ENCODE measurements at regions of chr19 and their contacts with region 1.

Region 1: DNA sequence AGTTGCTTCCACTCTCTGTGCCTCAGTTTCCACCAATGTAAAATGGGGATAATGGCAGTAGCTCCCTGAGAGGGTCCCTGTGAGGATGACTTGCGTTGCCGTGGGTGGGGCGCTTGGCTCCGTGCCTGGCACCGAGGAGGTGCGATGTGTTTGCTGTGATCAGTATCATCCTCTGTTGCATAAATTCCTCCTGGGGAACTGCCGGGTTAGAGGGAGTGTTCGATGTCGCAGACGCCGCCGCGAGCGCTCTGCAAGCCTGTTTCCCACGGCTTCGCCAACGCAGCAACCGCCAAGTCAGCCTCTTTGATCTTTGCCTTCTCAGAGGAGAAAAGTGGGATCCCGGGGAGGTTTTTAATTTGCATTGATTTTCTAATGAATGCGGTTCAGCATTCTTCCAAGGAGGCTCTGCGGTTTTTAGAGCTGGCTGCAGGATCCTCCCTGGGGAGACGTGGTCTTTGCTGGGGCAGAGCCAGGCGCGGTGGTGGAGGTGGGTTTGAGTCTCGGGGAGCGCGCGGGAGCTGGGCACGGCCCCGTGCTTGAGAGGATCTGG is 7.6 kb downstream of the GPR32 start:
- H3K4me3 ChIP-seq: peak overlapping the region; percentile 16
- H3K27ac ChIP-seq: no peak overlapping the region
- H3K4me1 ChIP-seq: 0 out of 2 replicates have a peak, but pooled peaks cover 2% of the 10 kb centered on the region
- CTCF ChIP-seq: no peak

Region 2: DNA sequence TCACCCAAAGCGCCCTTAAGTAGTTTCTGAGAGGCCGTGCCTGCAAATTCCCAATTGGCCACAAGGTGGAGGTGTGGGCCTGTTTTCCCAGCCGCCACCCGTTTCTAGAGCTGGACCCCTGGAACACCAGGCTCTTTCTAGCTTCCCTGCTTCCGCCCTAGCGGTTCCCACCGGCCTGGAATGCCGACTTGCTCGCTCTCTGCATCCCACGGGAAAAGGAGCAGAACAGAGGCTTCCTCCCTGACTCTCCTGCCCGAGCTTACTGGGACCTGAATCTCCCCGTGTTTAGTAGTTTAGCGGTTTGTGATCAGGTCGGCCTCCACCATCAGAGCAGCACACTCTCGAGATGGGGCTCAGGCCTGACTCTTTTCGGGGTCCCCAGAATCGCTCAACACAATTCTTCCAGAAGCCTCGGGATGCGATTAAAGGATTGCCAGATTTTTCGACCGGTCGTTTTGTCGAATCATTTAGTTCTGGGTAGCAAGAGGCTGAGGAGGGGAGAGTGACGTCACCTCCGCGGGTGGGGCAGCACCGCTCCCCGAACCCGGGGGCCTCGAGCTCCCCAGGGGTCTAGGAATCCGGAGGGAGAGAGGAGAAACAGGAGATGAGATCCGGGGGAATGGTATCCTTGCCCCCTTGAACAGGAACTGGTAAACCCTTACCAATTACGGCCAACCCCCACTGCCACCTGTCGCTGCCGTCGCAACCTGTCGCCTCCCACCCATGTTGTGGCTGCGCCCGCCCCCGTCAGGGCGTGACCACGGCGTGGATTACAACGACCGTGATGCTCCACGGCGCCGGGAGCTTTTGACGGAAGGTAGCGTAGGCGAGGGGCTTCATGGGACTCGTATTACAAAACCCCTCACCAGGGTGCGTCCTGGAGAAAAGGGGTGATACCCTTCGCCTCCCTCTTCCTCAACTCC is 420.4 kb before region 1 on chr19:
- CTCF ChIA-PET with region 1: interaction called, 14 read pairs
- POLR2A ChIA-PET with region 1: no interaction called
- H3K4me3 ChIP-seq: peak overlapping the region; percentile 32
- H3K27ac ChIP-seq: no peak overlapping the region
- H3K4me1 ChIP-seq: no peaks in the 10 kb centered on the region
- CTCF ChIP-seq: peak; percentile 73

Region 3: DNA sequence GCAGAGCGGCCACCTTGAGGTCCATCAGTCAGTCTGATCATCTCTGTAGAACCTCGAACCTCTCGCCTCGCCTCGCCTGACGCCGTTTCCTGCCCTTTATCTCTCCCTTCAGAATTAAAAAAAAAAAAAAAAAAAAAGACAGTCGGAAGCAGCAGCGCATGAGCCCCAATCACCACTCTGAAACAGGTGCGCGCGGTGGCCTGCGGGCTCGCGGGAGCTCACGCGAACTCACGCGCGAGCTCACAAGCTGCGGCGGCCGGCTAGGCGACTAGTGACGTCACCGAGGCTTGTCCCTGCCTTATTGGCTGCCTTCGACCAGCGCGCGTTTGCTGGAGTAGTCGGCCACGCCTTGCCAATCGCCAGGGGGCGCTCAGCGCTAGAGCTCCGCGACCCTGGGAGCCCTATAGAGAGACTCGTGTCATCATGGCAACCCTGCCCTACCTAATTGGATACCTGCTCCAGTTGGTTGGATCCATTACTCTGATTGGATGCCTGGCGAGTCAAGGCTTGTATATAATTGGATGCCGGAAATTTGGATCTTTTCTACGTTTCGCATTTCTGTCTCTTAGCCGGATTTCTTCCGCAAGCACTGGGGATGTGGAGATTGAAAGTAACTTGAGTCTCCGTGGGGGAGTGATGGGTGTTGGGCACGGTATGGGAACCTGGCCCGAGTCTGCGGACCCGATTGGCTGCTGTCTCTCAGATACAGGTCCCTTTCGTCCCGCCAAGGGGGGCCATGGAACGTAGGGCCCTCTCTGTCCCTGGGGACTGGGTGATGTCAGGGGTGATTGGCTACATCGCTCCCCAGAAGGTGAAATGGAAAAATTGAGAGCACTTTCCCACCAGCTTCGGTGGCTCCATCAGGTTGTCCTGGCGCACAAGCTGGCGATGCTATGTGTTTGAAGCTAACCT is 169.7 kb before region 1 on chr19:
- CTCF ChIA-PET with region 1: interaction called, 10 read pairs
- POLR2A ChIA-PET with region 1: interaction called, 7 read pairs
- H3K4me3 ChIP-seq: peak overlapping the region; percentile 21
- H3K27ac ChIP-seq: no peak overlapping the region
- H3K4me1 ChIP-seq: no peaks in the 10 kb centered on the region
- CTCF ChIP-seq: peak; percentile 83

Region 4: DNA sequence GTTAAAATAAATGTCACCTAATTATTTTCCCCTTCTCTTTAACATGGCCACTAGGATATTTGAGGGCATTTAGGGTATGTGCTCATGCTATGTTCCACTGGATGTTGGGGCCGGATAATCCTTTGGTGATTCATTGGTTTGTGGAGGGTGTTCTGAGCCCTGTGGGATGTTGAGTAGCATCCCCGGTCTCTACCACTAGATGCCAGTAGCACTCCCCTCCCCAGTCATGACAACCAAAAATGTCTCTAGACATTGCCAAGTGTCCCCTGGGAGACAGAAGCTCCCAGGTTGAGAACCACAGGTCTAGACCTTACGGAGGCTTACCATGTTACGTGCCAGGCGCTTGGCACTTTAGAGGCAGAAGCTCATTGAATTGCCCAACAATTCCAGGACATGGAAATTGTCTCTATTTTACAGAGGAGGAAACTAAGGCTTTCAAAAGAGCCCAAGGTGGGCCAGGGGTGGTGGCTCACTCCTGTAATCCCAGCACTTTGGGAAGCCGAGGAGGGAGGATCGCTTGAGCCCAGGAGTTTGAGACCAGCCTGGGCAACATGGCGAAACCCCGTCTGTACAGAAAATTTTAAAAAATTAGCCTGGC is 72.3 kb before region 1 on chr19:
- CTCF ChIA-PET with region 1: interaction called, 151 read pairs
- POLR2A ChIA-PET with region 1: no interaction called
- H3K4me3 ChIP-seq: no peak overlapping the region
- H3K27ac ChIP-seq: no peak overlapping the region
- H3K4me1 ChIP-seq: no peaks in the 10 kb centered on the region
- CTCF ChIP-seq: peak; percentile 49; the same call in 1 of the 2 replicates

Region 5: DNA sequence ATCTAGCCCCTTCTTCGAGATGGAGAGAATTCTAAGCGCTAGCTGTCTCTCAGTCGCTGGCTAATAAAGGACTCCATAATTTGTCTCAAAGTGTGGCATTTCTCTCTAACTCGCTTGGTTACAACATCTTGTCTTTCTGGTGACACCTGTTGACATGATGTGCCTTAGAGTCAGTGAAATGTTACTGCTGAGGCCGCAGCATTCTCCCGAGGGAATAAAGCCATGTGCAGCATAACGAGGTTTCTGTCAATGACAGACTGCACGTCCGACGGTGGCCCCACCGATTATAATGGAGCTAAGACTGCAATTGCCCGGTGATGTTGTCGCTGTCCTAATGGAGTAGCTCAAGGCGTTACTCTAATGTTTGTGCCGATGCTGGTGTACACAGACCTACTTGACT is 27.8 kb before region 1 on chr19:
- CTCF ChIA-PET with region 1: no interaction called
- POLR2A ChIA-PET with region 1: no interaction called
- H3K4me3 ChIP-seq: no peak overlapping the region
- H3K27ac ChIP-seq: no peak overlapping the region
- H3K4me1 ChIP-seq: no peaks in the 10 kb centered on the region
- CTCF ChIP-seq: no peak

Region 6: DNA sequence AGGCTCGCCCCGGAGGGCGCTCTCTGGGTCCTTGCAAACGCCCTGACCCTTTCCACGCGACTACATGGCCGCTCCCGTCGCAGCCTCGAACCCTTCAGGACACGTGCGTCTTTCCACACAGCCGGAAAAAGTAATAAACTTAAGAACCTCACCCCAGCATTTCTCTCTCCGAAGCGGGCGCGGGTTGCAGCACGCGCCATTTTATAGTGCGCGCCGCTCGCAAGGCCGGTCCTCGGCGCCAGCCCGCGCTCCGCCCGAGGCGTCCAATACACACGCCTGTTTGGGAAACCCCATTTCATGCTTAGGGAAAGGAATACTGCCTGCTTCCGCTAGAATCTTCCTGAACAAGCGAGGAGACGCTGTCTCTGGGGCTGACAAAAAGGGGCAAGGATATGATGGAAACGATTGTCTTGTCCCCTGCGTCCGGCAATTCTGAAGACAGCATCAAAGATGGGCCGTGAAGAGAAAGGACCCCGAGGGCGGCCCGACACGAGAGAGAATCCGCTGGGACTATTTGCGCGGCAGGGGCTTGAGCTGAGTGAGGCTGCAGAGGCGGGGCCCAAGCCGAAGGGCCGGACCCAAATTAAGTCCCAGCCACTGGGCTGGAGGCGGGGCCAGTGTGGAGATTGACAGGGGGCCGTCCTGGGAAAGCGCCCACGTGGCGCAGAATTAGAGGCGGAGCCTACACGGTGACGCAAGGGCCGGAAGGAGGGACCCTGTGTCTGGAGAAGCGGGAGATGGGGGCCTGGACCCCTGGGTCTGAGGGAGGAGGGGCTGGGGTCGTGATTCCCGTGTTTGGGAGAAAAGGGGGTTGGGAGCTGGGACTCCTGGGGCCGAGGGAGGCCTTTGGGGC is 26.8 kb after region 1 on chr19:
- CTCF ChIA-PET with region 1: interaction called, 4 read pairs
- POLR2A ChIA-PET with region 1: interaction called, 13 read pairs
- H3K4me3 ChIP-seq: peak overlapping the region; percentile 79
- H3K27ac ChIP-seq: peak overlapping the region; percentile 99
- H3K4me1 ChIP-seq: peaks cover 11% of the 10 kb centered on the region
- CTCF ChIP-seq: no peak

Region 7: GRCh38 chr19:50861025-50861424 is 83.2 kb after region 1 on chr19:
- CTCF ChIA-PET with region 1: no interaction called
- POLR2A ChIA-PET with region 1: no interaction called
- H3K4me3 ChIP-seq: no peak overlapping the region
- H3K27ac ChIP-seq: no peak overlapping the region
- H3K4me1 ChIP-seq: no peaks in the 10 kb centered on the region
- CTCF ChIP-seq: no peak

Measured in HEK293 (cell line).